ENCODE measurements at regions of chr11 and their contacts with region 1.

Region 1: GRCh38 chr11:129364143-129364654 is 11.4 kb upstream of the BARX2 start:
- DNase-seq: peak; percentile 85
- ATAC-seq: peak; percentile 100
- H3K4me3 Mint-ChIP-seq: no peak overlapping the region
- H3K27ac Mint-ChIP-seq: no peak overlapping the region
- H3K4me1 Mint-ChIP-seq: no peaks in the 10 kb centered on the region
- H3K27me3 Mint-ChIP-seq: peaks cover 35% of the 10 kb centered on the region

Region 2: DNA sequence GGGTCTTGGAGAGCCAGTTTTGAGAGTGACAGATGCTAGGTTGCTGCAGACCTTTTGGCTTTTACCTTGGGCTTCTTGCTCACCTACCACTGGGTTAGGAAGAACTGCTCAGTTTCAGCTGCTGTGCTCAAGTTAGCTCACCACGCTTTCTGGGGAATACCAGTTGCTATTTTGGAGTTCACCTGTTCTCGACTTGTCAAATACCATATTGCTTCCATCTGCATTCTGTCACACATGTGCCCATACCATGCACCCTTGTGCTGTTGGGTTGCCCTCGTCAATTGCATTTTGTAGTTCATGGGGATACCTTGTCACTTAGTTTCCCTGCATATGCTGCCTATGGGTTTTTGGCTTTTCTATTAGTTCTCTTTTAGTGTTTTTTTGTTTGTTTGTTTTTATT is 11.5 kb before region 1 on chr11:
- CTCF ChIA-PET with region 1: interaction called, 11 read pairs
- POLR2A ChIA-PET with region 1: no interaction called
- DNase-seq: no peak
- ATAC-seq: no peak
- H3K4me3 Mint-ChIP-seq: no peak overlapping the region
- H3K27ac Mint-ChIP-seq: no peak overlapping the region
- H3K4me1 Mint-ChIP-seq: no peaks in the 10 kb centered on the region
- H3K27me3 Mint-ChIP-seq: peaks cover 3% of the 10 kb centered on the region

Region 3: GRCh38 chr11:129375751-129376657 is 11.8 kb after region 1 on chr11 and contains the start of gene BARX2:
- CTCF ChIA-PET with region 1: interaction called, 12 read pairs
- POLR2A ChIA-PET with region 1: no interaction called
- DNase-seq: no peak
- ATAC-seq: peak; percentile 28
- H3K4me3 Mint-ChIP-seq: peak within 1 kb of the TSS; percentile 46
- H3K27ac Mint-ChIP-seq: no peak within 1 kb of the TSS
- H3K4me1 Mint-ChIP-seq: peaks cover 26% of the 10 kb centered on the region
- H3K27me3 Mint-ChIP-seq: peaks cover 72% of the 10 kb centered on the region
- total RNA-seq, gene BARX2: not detected

Region 4: GRCh38 chr11:129418039-129418438 is 53.8 kb after region 1 on chr11:
- CTCF ChIA-PET with region 1: no interaction called
- POLR2A ChIA-PET with region 1: no interaction called
- DNase-seq: no peak
- ATAC-seq: no peak
- H3K4me3 Mint-ChIP-seq: no peak overlapping the region
- H3K27ac Mint-ChIP-seq: no peak overlapping the region
- H3K4me1 Mint-ChIP-seq: no peaks in the 10 kb centered on the region
- H3K27me3 Mint-ChIP-seq: no peaks in the 10 kb centered on the region

Region 5: DNA sequence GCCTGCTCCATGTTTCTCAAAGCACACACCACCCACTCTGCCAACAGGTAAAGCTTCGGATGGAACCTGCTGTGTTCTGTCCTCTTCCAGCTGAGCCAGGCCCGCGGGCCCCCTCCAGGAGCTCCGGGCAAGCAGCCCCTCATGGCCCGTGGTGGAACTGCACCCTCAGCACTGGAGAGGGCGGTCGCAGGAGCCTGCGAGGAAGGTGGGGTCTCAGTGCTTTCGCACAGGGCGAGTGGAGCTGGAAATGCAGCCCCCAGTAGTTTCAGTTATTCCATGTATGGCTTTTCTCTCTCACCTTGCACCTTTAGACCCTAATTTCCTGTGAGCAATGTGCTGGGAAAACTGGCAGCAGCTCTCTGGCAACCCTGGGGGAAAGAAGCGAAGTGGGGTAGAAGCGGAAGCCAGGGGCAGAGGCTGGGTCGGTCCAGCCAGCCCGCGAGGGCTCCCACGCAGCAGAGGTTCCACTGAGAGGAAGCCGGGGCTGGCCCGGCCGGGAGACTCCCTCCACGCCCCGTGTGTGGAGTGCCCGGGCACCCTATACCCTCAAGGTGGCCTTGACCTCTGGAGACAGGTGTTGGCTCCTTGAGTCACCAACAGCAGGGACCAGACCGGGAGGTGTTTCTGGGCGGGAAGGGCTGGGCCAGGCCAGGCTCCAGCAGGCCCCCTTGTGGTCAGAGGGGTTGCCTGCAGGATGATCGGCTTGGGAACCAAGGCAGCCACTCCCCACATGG is 331.5 kb after region 1 on chr11:
- CTCF ChIA-PET with region 1: interaction called, 13 read pairs
- POLR2A ChIA-PET with region 1: no interaction called
- DNase-seq: peak; percentile 70
- ATAC-seq: peak; percentile 93
- H3K4me3 Mint-ChIP-seq: peak overlapping the region; percentile 73
- H3K27ac Mint-ChIP-seq: peak overlapping the region; percentile 25
- H3K4me1 Mint-ChIP-seq: peaks cover 7% of the 10 kb centered on the region
- H3K27me3 Mint-ChIP-seq: no peaks in the 10 kb centered on the region

Region 6: DNA sequence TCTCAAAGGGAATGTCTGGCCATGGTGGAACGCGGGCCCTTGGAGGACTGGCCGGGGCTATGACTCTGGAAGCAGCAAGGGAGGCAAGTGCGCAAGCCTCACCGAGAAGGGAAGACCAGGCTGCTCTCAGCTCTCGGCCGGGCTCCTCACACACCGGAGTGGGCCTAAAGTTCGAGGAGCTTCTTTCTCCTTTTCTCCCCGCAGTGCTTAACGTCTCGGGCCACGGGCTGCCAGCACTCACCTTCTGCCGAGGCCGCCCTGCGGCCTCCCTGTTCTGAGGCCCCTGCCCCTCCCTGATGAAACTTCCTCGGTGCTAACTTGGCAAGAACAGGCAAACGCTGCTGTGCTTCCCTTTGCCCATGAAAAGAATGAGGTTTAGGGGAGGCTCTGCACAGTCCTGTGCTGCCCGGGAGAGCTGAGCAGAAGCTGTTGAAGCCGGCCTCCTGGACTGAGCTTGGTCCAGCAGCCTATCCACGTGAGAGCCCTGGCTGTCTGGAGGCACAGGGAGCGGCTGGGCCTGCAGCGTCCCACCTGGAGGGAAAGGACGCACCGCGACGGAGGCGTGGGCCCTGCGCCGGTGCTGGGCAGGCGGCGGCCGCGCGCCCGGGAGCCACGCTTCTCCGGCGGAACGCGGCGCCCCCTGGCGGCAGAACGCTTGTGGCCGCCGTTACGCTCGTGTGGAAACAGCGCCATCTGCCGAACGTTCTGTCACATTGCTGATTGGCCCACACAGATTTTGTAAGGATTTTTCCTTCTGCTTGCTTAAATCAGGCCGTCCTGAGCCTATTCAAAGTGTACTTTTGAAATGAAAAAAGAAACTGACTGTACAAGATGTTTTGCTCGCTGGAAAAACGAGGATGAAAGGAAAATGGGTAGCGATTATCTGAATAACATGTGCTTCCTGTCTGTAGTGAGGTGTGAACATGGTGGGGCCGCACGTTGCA is 386.4 kb after region 1 on chr11:
- CTCF ChIA-PET with region 1: interaction called, 10 read pairs
- POLR2A ChIA-PET with region 1: no interaction called
- DNase-seq: peak; percentile 81
- ATAC-seq: peak; percentile 96
- H3K4me3 Mint-ChIP-seq: no peak overlapping the region
- H3K27ac Mint-ChIP-seq: no peak overlapping the region
- H3K4me1 Mint-ChIP-seq: peaks cover 3% of the 10 kb centered on the region
- H3K27me3 Mint-ChIP-seq: peaks cover 12% of the 10 kb centered on the region

Measured in activated CD8-positive, alpha-beta T cell treated with anti-CD3 and anti-CD28 coated beads, Interleukin-2, amount 10 ng/mL, durations not matched to agents 7 days and 5 days (primary cell).